OCI-LY7 (cell line): ENCODE measurements at regions of chr13 and their contacts with region 1.

Region 1: GRCh38 chr13:40963919-40964318 is 55.2 kb downstream of the ELF1 start:
- DNase-seq: no peak
- H3K4me3 ChIP-seq: no peak overlapping the region
- H3K27ac ChIP-seq: peak overlapping the region; percentile 24
- H3K4me1 ChIP-seq: peaks cover 85% of the 10 kb centered on the region
- CTCF ChIP-seq: no peak

Region 2: GRCh38 chr13:40946485-40946884 is 17.4 kb before region 1 on chr13:
- CTCF ChIA-PET with region 1: no interaction called
- POLR2A ChIA-PET with region 1: interaction called, 10 read pairs
- intact Hi-C with region 1: no loop called
- DNase-seq: no peak
- H3K4me3 ChIP-seq: no peak overlapping the region
- H3K27ac ChIP-seq: no peak overlapping the region
- H3K4me1 ChIP-seq: peaks cover 19% of the 10 kb centered on the region
- CTCF ChIP-seq: no peak

Region 3: DNA sequence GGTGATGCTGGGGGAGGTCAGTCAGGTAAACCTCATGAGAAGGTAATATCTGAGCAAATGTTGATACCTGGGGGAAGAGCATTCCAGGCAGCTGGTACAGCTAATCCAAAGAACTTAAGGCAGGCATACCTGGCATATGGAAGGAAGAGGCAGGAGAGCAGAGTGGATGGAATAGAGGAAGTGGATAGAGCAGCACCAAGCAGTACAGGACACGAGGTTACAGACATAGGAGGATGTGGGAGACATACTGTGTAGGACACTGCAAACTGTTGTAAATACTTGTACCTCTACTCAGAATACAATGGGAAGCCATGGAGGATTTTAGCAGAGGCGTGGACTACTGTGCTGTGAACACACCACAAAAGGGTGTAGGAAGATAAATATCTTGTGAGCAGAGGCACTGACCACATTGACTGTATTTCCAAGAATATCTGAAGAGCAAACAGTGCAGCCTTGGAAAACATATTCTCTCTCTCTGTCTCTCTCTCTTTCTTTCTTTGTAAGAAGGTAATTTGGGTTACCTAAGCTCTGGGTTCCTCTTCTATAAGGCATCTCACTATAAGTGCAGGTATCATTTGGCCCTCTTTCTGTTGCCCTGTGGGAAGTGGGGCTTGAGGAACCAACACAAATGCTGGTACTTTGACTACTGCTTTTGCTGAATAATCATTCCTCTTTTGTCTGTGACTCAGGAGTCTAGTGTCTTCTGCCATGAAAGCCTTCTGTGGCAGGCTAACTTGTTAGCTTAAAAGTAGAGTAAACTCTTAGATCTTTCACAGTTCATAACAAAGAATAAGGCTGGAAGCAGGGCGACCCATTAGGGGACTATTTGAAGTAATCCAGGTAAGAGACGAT is 759.0 kb after region 1 on chr13:
- CTCF ChIA-PET with region 1: no interaction called
- POLR2A ChIA-PET with region 1: no interaction called
- intact Hi-C with region 1: no loop called
- DNase-seq: no peak
- H3K4me3 ChIP-seq: no peak overlapping the region
- H3K27ac ChIP-seq: no peak overlapping the region
- H3K4me1 ChIP-seq: no peaks in the 10 kb centered on the region
- CTCF ChIP-seq: no peak